ENCODE measurements at regions of chr7 and their contacts with region 1.

Region 1: DNA sequence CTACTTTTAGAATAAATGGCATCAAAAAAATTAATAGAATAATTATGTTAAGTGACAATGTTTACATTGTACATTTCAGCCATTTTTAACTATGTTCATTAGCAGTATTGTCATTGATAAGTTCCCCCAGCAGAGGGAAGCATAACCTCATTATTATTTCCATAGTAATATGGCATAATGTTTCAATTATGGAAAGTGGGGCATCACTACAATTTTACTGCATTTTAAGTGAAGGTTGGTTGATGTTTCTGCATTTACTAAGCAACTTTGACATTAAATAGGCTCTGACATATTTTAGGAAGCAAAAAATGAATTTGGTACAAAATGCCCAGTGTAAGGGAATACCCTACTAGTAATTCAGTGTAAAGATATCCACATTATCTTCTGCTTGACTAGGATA is 218.3 kb downstream of the SEMA3A start:
- DNase-seq: peak in 4 of 5 donors; percentile 18 to 33 (median 24)
- H3K4me3 ChIP-seq: no peak overlapping the region
- H3K4me3 Mint-ChIP-seq: no peak overlapping the region
- H3K27ac ChIP-seq: no peak overlapping the region
- H3K27ac Mint-ChIP-seq: no peak overlapping the region
- H3K4me1 ChIP-seq: no peaks in the 10 kb centered on the region
- H3K4me1 Mint-ChIP-seq: no peaks in the 10 kb centered on the region
- H3K27me3 ChIP-seq: no peaks in the 10 kb centered on the region
- H3K27me3 Mint-ChIP-seq: no peaks in the 10 kb centered on the region

Region 2: DNA sequence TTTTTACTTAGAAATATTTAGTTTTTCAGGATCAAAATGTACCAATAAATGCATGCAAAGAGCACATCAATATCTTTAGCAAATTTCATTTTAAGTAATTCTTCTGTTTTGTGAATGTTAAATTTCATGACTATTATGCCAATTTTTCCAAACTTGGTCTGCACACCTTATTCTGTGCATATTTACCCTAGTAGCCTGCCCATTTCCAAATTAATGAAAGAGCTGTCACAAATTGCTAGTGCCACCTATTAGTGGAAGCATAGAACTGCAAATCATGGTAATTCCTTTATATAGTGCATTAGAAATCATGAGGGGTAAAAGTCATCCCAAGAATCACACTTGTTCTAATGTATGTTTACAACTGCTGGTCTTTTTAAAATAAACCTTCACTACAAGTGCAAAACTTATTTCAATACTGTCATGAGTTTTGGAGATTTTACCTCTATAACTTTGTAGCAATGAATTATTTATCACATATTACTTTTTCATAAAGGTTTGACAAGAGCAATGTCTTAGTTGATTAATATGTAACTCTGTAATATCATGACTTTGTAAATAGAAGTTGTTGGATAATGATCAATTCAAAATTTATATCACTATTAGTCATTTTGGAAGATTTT is 212.6 kb after region 1 on chr7:
- CTCF ChIA-PET with region 1: no interaction called
- POLR2A ChIA-PET with region 1: no interaction called
- intact Hi-C with region 1: loop called (anchors 1 kb)
- DNase-seq: no peak
- H3K4me3 ChIP-seq: no peak overlapping the region
- H3K4me3 Mint-ChIP-seq: no peak overlapping the region
- H3K27ac ChIP-seq: no peak overlapping the region
- H3K27ac Mint-ChIP-seq: no peak overlapping the region
- H3K4me1 ChIP-seq: no peaks in the 10 kb centered on the region
- H3K4me1 Mint-ChIP-seq: peaks cover 0 to 3% (median 1%) of the 10 kb centered on the region in 4 donors
- H3K27me3 ChIP-seq: no peaks in the 10 kb centered on the region
- H3K27me3 Mint-ChIP-seq: no peaks in the 10 kb centered on the region

Region 3: GRCh38 chr7:84455788-84456187 is 479.5 kb after region 1 on chr7:
- CTCF ChIA-PET with region 1: no interaction called
- POLR2A ChIA-PET with region 1: no interaction called
- intact Hi-C with region 1: loop called (anchors 5 kb)
- DNase-seq: no peak
- H3K4me3 ChIP-seq: no peak overlapping the region
- H3K4me3 Mint-ChIP-seq: no peak overlapping the region
- H3K27ac ChIP-seq: no peak overlapping the region
- H3K27ac Mint-ChIP-seq: no peak overlapping the region
- H3K4me1 ChIP-seq: no peaks in the 10 kb centered on the region
- H3K4me1 Mint-ChIP-seq: no peaks in the 10 kb centered on the region
- H3K27me3 ChIP-seq: no peaks in the 10 kb centered on the region
- H3K27me3 Mint-ChIP-seq: no peaks in the 10 kb centered on the region